WTC11 (cell line): ENCODE measurements at regions of chr20 and their contacts with region 1.

Region 1: GRCh38 chr20:22846863-22847262 is 188.2 kb upstream of the SSTR4 start:
- DNase-seq: no peak
- ATAC-seq: no peak
- H3K4me3 Mint-ChIP-seq: no peak overlapping the region
- H3K27ac Mint-ChIP-seq: no peak overlapping the region
- H3K4me1 Mint-ChIP-seq: 0 out of 2 replicates have a peak, but pooled peaks cover 3% of the 10 kb centered on the region
- H3K27me3 Mint-ChIP-seq: no peaks in the 10 kb centered on the region
- CTCF ChIP-seq: no peak

Region 2: GRCh38 chr20:22675341-22675740 is 171.5 kb before region 1 on chr20:
- CTCF ChIA-PET with region 1: no interaction called
- POLR2A ChIA-PET with region 1: no interaction called
- DNase-seq: no peak
- ATAC-seq: no peak
- H3K4me3 Mint-ChIP-seq: no peak overlapping the region
- H3K27ac Mint-ChIP-seq: no peak overlapping the region
- H3K4me1 Mint-ChIP-seq: peaks cover 10% of the 10 kb centered on the region
- H3K27me3 Mint-ChIP-seq: peaks cover 6% of the 10 kb centered on the region
- CTCF ChIP-seq: no peak

Region 3: DNA sequence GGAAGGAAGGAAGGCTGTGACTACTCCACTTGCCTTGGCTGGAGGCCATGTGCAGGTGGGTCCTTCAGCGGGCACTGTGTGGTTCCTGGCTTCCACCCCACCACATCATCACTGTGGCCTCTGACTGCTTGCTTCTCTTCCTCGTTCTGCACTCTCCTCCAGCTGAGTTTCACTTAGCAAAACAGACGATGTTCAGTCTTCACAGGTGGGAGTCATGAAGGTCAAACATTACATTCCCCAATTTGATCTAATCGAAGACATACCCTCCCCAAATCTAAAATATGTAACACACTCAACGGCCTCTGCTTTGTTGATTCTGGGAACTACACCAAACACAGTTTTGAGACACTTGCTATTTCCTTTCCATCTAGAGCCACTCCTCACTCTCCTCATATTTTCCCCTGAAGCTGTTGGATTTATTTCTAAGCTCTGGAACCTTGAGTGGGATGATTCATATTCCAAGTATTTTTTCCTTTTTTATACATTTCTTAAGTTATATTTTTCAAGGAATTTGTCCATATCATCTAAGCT is 130.0 kb before region 1 on chr20:
- CTCF ChIA-PET with region 1: no interaction called
- POLR2A ChIA-PET with region 1: no interaction called
- DNase-seq: no peak
- ATAC-seq: no peak
- H3K4me3 Mint-ChIP-seq: no peak overlapping the region
- H3K27ac Mint-ChIP-seq: no peak overlapping the region
- H3K4me1 Mint-ChIP-seq: peaks cover 6% of the 10 kb centered on the region
- H3K27me3 Mint-ChIP-seq: peaks cover 1% of the 10 kb centered on the region
- CTCF ChIP-seq: no peak

Region 4: DNA sequence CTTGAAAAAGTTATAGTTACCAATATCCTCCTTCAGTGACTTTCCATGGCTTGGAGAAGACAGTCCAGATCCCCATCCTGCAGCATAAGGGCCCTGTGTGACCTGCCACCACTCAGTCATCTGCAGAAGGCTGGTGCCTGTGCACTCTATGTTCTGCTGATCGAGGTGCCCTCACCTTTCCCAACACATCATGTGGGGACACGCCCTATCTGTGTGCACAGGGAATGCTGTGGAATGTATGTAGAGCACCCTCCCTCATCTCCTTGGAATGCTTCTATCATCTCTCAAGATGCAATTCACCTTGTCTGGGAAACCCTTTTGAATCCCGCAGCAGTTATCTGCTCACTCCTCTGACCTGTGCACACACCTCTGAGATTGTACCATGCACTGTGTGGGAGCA is 19.0 kb before region 1 on chr20:
- CTCF ChIA-PET with region 1: no interaction called
- POLR2A ChIA-PET with region 1: no interaction called
- DNase-seq: no peak
- ATAC-seq: no peak
- H3K4me3 Mint-ChIP-seq: no peak overlapping the region
- H3K27ac Mint-ChIP-seq: no peak overlapping the region
- H3K4me1 Mint-ChIP-seq: peaks cover 3% of the 10 kb centered on the region; the same call in 1 of the 2 replicates
- H3K27me3 Mint-ChIP-seq: no peaks in the 10 kb centered on the region
- CTCF ChIP-seq: no peak

Region 5: DNA sequence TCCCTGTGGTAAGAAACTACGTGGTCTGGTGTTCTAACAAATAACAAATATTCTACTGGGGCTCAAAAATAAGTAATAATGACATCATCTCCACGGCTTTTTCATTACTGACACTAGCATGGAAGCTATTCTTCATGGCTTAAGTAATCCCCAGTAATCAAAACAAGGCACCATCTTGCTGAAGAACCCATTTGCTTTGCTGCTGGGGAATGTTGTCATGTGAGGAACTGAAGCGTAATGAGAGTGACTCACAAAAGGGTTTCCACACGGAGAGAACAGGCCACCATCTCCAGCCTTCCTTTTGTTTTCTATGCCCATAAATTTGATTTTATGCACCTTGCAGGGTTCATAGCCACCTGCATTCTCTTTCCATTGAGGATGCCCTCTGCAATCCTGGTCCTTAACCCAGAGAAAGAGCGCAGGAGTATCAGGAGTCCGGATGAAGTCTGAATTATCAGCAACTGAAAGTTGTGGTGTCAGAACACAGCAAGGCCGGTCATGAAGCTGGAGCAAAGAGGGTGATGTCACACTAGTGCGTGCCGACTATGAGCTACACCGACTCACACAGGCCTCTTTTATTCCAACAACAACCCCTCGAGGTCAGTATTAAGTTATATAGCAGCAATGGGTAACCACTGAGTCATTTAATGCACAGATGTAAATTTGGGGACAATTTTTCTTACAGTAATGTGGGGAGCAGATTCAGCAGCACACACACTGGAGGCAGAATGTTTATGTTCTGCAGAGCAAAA is 14.5 kb after region 1 on chr20:
- CTCF ChIA-PET with region 1: interaction called, 24 read pairs
- POLR2A ChIA-PET with region 1: no interaction called
- DNase-seq: no peak
- ATAC-seq: no peak
- H3K4me3 Mint-ChIP-seq: no peak overlapping the region
- H3K27ac Mint-ChIP-seq: no peak overlapping the region
- H3K4me1 Mint-ChIP-seq: peaks cover 8% of the 10 kb centered on the region; the same call in 1 of the 2 replicates
- H3K27me3 Mint-ChIP-seq: no peaks in the 10 kb centered on the region
- CTCF ChIP-seq: no peak

Region 6: GRCh38 chr20:22908440-22908839 is 61.6 kb after region 1 on chr20:
- CTCF ChIA-PET with region 1: interaction called, 14 read pairs
- POLR2A ChIA-PET with region 1: no interaction called
- DNase-seq: peak; percentile 17
- ATAC-seq: peak; percentile 80
- H3K4me3 Mint-ChIP-seq: no peak overlapping the region
- H3K27ac Mint-ChIP-seq: no peak overlapping the region
- H3K4me1 Mint-ChIP-seq: peaks cover 5% of the 10 kb centered on the region; the same call in 1 of the 2 replicates
- H3K27me3 Mint-ChIP-seq: no peaks in the 10 kb centered on the region
- CTCF ChIP-seq: no peak

Region 7: GRCh38 chr20:23340524-23340923 is 493.7 kb after region 1 on chr20:
- CTCF ChIA-PET with region 1: interaction called, 12 read pairs
- POLR2A ChIA-PET with region 1: no interaction called
- DNase-seq: peak; percentile 74
- ATAC-seq: peak; percentile 92
- H3K4me3 Mint-ChIP-seq: no peak overlapping the region
- H3K27ac Mint-ChIP-seq: no peak overlapping the region
- H3K4me1 Mint-ChIP-seq: peaks cover 13% of the 10 kb centered on the region
- H3K27me3 Mint-ChIP-seq: no peaks in the 10 kb centered on the region; the same call in 1 of the 2 replicates
- CTCF ChIP-seq: 0 out of 2 replicates have a peak, but pooled peaks have one; percentile 21